GM10248 (cell line): ENCODE measurements at regions of chr17 and their contacts with region 1.

Region 1: DNA sequence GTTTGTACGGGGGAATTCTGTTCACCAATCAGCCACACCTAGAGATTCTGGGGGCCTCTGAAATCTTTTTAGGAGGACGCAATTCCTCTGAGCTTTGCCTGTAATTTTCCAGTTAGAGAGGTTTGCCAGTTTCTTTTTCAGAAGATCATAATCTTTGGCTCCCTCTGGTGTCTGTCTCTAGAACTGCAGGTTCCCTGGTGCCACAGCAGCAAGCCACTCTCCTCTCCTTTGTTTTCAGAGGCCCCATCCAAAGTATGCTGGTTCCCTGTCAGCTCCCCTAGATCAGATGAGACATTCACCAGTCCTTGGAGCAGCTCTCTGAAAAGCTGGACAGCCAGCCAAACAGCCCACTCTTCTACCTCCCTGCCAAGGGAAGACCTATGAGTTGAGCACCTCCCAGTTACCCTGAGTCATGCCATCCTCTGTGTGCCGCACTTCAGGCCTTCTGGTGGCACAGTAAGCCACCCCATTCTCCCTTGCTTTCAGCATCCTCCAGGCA is 36.1 kb downstream of the RNF112 start:
- DNase-seq: peak; percentile 81
- CTCF ChIP-seq: peak; percentile 76

Region 2: DNA sequence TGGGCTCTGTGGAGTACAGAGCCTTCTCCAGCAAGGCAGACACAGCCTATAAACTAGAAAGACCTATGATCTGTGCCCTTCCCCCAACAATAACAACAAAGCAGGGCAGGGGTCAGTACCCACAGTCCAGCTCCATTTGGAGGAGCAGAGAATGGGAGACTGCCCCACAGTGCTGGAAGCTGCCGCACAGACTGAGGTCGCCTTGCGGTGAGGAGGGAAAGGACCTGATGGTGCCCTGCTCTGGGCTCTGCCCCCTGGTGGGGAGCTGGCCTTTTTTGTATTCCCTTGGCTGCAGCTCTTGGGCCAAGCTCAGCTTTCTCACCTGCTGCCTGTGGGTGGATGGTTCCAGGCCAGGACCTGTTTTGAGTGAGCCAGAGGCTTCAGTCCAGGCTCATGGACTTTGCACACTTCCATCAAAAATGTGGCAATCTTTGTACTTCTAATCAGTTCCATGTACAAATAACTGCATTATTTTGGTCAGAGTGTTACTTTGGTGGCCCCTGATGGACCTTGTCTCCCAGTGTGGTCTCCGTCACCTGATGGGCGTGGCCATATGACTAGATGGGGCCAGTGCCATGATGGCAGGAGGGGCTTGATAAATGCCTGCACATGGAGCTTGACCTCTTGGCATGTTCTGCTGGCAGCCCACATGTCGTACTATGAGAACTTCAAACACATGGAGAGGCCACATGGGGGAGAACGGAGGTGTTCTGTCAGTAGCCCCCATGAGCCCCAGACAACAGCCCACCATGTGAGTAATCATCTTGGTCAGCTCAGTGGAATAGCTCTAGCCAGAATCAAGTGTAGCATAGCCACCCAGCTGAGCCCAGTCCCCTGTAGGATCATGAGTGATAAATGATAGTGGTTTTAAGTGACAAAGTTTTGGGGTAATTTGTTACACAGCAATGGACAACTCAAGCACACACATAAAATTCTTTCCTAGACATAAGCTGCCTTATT is 108.8 kb before region 1 on chr17:
- CTCF ChIA-PET with region 1: interaction called, 11 read pairs
- POLR2A ChIA-PET with region 1: no interaction called
- DNase-seq: peak; percentile 84
- CTCF ChIP-seq: peak; percentile 66

Region 3: GRCh38 chr17:19433727-19434340 is 13.3 kb before region 1 on chr17:
- CTCF ChIA-PET with region 1: interaction called, 19 read pairs
- POLR2A ChIA-PET with region 1: no interaction called
- DNase-seq: no peak
- CTCF ChIP-seq: no peak

Region 4: GRCh38 chr17:19460700-19461099 is 13.6 kb after region 1 on chr17:
- CTCF ChIA-PET with region 1: interaction called, 43 read pairs
- POLR2A ChIA-PET with region 1: no interaction called
- DNase-seq: no peak
- CTCF ChIP-seq: no peak